Activated CD8-positive, alpha-beta T cell treated with anti-CD3 and anti-CD28 coated beads for 36 hours (primary cell): ENCODE measurements at regions of chr12 and their contacts with region 1.

Region 1: DNA sequence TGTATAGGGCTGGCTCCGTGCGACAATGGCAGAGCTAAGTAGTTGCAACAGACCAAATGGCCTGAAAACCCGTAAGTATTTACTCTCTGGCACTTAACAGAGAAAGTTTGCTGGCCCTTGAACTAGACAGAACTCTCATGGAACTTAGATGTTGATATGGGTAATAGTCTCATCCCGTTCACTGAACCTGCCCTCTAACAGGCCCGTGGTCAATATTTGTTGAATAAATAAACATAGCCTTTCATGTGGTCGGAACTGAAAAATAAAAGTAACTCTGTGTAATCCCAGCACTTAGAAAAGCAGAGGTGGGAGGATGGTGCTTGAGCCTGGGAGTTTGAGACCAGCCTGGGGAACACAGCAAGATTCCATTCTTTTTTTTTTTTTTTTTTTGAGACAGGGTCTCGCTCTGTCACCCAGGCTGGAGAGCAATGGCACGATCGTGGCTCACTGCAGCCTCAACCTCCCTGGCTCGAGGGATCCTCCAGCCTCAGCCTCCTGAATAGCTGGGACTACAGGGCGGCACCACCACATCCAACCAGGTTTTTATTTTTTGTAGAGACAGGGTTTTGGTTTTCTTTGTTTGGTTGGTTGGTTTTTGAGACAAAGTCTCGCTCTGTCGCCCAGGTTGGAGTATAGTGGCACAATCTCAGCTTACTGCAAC is 29.7 kb downstream of the KDM2B start:
- DNase-seq: no peak
- ATAC-seq: no peak
- H3K4me3 Mint-ChIP-seq: no peak overlapping the region
- H3K27ac Mint-ChIP-seq: no peak overlapping the region
- H3K4me1 Mint-ChIP-seq: peaks cover 17% of the 10 kb centered on the region
- H3K27me3 Mint-ChIP-seq: no peaks in the 10 kb centered on the region
- CTCF ChIP-seq: no peak

Region 2: DNA sequence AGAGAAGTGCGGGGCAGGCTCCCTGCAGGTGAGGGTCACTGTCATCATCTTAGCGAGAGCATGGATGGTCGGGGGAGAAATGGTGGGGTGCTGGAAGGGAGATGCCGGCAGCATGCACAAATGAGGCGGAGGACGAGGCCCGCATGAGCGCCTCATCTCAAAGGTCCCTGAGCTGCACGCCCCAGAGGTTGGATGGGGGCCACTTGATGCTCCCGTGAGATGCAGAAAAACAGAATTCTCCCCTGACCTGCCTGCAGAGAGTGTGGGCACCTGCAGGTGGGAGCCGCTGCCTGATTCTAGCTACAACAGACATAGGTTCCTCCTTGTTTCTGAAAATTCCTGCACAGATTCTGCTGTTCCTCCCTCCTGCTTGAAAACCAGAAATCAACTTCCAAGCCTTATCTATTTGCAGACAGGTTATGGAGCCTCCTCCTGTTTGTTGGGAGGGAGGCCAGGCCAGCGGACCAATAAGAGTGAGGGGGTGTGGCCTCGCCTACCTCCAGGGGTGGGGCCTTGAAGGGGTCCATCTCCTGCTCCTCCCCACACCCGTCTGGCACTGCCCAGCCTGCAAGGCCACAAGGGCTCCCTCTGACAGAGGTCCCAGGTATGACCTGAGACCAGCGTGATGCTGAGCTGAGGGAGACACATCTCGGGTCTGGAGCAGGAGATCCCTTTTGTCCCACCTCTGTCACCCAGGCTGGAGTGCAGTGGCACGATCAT is 37.5 kb before region 1 on chr12:
- CTCF ChIA-PET with region 1: no interaction called
- POLR2A ChIA-PET with region 1: no interaction called
- intact Hi-C with region 1: no loop called
- DNase-seq: peak; percentile 39
- ATAC-seq: peak; percentile 80
- H3K4me3 Mint-ChIP-seq: no peak overlapping the region
- H3K27ac Mint-ChIP-seq: peak overlapping the region; percentile 72
- H3K4me1 Mint-ChIP-seq: peaks cover 9% of the 10 kb centered on the region
- H3K27me3 Mint-ChIP-seq: no peaks in the 10 kb centered on the region
- CTCF ChIP-seq: no peak

Region 3: DNA sequence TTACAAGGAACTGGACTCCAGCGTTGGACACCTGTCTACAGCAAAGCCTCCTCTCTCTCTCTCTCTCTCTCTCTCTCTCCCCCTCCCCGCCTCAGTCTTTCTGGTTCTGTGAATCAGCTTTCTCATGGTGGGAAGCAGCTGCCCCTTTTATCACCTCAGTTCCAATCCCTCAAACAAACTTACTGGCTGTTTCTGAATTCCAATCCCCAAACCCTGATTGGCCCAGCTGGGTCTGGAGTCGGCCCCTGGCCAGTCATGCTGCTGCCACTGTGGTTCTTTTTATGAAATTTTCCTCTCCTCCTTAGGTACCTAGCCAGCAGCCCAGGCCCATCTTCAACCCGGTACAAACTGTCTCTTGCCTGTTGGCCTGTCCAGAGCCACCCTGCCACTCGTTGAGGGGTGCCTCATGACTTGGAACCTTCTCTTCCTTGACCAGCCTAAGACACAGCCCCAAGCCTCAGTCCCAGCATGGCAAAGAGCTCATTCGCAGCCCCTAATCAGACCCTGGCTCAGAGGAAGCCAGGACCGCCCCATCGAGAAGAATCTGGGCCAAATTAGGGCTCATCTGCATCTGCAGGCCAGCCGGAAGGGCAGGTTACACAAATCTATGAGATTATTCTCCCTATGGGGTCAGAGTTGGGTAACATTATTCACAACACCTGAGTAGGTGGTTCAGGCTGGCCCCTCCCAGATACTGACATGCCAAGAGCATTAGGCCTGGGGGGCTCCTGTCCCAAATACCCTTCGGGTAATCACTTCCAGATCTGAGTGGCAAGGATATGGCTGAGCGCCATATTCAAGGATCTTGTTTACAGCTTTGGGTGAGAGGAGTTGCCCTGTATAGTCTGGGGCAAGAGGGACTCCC is 127.8 kb after region 1 on chr12:
- CTCF ChIA-PET with region 1: interaction called, 29 read pairs
- POLR2A ChIA-PET with region 1: no interaction called
- intact Hi-C with region 1: no loop called
- DNase-seq: peak; percentile 30
- ATAC-seq: peak; percentile 34
- H3K4me3 Mint-ChIP-seq: no peak overlapping the region
- H3K27ac Mint-ChIP-seq: peak overlapping the region; percentile 56
- H3K4me1 Mint-ChIP-seq: peaks cover 9% of the 10 kb centered on the region
- H3K27me3 Mint-ChIP-seq: no peaks in the 10 kb centered on the region
- CTCF ChIP-seq: no peak

Region 4: GRCh38 chr12:121688966-121689365 is 137.9 kb after region 1 on chr12:
- CTCF ChIA-PET with region 1: interaction called, 29 read pairs
- POLR2A ChIA-PET with region 1: no interaction called
- intact Hi-C with region 1: loop called (anchors 5 kb)
- DNase-seq: no peak
- ATAC-seq: no peak
- H3K4me3 Mint-ChIP-seq: no peak overlapping the region
- H3K27ac Mint-ChIP-seq: no peak overlapping the region
- H3K4me1 Mint-ChIP-seq: peaks cover 5% of the 10 kb centered on the region
- H3K27me3 Mint-ChIP-seq: no peaks in the 10 kb centered on the region
- CTCF ChIP-seq: no peak